ENCODE measurements at regions of chr1 and their contacts with region 1.

Region 1: DNA sequence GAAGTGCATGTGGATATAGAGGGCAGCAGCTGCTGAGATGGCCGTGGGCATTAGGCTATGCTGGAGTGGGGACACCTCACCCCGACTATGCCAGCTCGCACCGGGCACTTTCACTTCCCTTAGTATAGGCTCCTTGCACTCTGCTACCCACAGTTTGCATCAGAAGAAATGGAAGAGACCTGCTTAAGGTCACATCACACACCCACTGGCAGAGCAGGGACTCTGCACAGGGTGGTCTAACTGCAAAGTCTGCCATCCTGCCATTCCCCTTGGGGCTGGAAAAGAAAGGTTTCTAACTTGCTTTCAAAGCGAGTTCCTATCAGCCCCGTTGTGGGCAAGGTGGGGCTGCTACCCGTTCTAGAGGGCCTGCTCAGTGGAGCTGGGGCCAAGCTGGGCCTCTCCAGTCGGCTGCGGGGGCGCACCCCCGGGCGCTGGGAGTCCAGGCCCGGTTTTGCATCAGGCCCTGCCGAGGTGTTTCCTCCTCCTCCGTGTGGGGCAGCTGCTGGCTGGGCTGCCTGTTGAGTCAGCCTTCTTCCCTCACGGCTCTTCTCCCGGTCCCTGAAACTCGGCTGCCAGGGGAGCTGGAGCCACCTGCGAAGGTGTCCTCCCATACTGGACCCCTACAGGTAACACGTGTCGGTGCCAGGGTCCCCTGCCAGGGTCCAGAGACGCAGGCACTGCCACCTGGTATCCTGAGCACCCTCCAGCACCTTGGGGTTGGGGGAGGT is at the start of gene SYTL1:
- DNase-seq: peak; percentile 38 to 84 (median 72)
- ATAC-seq: peak; percentile 64
- H3K4me3 ChIP-seq: peak within 1 kb of the TSS; percentile 85 to 91
- H3K4me3 Mint-ChIP-seq: peak within 1 kb of the TSS; percentile 97
- H3K27ac ChIP-seq: peak within 1 kb of the TSS; percentile 69 to 86
- H3K27ac Mint-ChIP-seq: peak within 1 kb of the TSS; percentile 93
- H3K4me1 ChIP-seq: peaks cover 38% of the 10 kb centered on the region
- H3K4me1 Mint-ChIP-seq: peaks cover 55% of the 10 kb centered on the region
- H3K27me3 ChIP-seq: no peaks in the 10 kb centered on the region
- H3K27me3 Mint-ChIP-seq: no peaks in the 10 kb centered on the region
- CTCF ChIP-seq: no peak
- total RNA-seq, gene SYTL1: 103 to 113 TPM

Region 2: GRCh38 chr1:27321813-27322577 is 19.7 kb before region 1 on chr1 and contains the start of gene TMEM222:
- CTCF ChIA-PET with region 1: interaction called, 9 read pairs
- POLR2A ChIA-PET with region 1: interaction called, 8 read pairs
- intact Hi-C with region 1: loop called (anchors 1 kb)
- DNase-seq: peak; percentile 95 to 99 (median 97)
- ATAC-seq: peak; percentile 93
- H3K4me3 ChIP-seq: peak within 1 kb of the TSS; percentile 95 to 99
- H3K4me3 Mint-ChIP-seq: peak within 1 kb of the TSS; percentile 98
- H3K27ac ChIP-seq: peak within 1 kb of the TSS; percentile 88 to 95
- H3K27ac Mint-ChIP-seq: peak within 1 kb of the TSS; percentile 97
- H3K4me1 ChIP-seq: peaks cover 40% of the 10 kb centered on the region
- H3K4me1 Mint-ChIP-seq: peaks cover 48% of the 10 kb centered on the region
- H3K27me3 ChIP-seq: no peaks in the 10 kb centered on the region
- H3K27me3 Mint-ChIP-seq: no peaks in the 10 kb centered on the region
- CTCF ChIP-seq: no peak
- total RNA-seq, gene TMEM222: 24.1 to 25.2 TPM

Region 3: GRCh38 chr1:27357281-27358037 is 15.8 kb after region 1 on chr1:
- CTCF ChIA-PET with region 1: interaction called, 120 read pairs
- POLR2A ChIA-PET with region 1: interaction called, 27 read pairs
- intact Hi-C with region 1: loop called (anchors 1 kb)
- DNase-seq: peak; percentile 64 to 93 (median 81)
- ATAC-seq: peak; percentile 78
- H3K4me3 ChIP-seq: peak overlapping the region; percentile 57 to 78
- H3K4me3 Mint-ChIP-seq: peak overlapping the region; percentile 86
- H3K27ac ChIP-seq: peak overlapping the region; percentile 38 to 59
- H3K27ac Mint-ChIP-seq: peak overlapping the region; percentile 89
- H3K4me1 ChIP-seq: peaks cover 46% of the 10 kb centered on the region
- H3K4me1 Mint-ChIP-seq: peaks cover 55% of the 10 kb centered on the region
- H3K27me3 ChIP-seq: no peaks in the 10 kb centered on the region
- H3K27me3 Mint-ChIP-seq: no peaks in the 10 kb centered on the region
- CTCF ChIP-seq: peak; percentile 91

Region 4: DNA sequence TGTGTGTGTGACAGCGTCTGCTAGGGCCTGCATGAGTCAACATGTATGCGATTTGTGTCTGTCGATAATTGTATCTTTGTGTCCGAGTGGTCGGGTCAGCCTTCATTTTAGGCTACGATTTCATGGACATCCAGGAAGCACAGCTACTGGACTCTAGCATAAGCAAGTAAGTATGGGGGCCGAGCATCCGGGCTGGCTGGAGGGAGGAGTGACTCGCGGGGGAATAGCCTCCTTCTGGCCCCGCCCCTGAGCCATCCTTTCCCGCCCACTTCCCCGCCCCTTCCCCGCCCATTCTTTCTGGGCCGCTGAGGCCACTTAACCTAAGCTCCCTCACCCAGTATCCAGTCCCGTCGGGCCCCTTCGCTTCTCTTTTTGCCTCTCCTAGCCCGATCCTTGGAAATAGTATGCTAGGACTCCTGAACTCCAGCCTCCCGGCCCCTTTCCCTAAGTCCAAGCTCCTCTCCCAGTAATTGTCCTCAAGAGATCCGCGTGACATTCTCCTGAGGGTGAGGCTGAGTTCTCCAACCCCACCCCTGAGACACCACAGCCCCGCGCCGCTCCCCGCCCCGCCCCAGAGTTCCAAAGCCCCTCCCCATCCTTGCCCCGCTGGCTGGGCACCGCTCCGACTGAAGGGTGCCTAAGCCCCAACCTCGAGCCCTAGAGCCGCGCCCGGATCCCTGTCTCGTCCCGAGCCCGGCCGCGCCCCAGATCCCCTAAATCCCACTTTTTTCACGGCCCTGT is 23.9 kb after region 1 on chr1:
- CTCF ChIA-PET with region 1: interaction called, 8 read pairs
- POLR2A ChIA-PET with region 1: interaction called, 11 read pairs
- intact Hi-C with region 1: loop called in 1 of 2 experiments (anchors 1 kb)
- DNase-seq: peak; percentile 62 to 85 (median 78)
- ATAC-seq: peak; percentile 78
- H3K4me3 ChIP-seq: peak overlapping the region; percentile 66 to 73
- H3K4me3 Mint-ChIP-seq: peak overlapping the region; percentile 86
- H3K27ac ChIP-seq: no peak overlapping the region
- H3K27ac Mint-ChIP-seq: no peak overlapping the region
- H3K4me1 ChIP-seq: peaks cover 17% of the 10 kb centered on the region
- H3K4me1 Mint-ChIP-seq: peaks cover 34% of the 10 kb centered on the region
- H3K27me3 ChIP-seq: no peaks in the 10 kb centered on the region
- H3K27me3 Mint-ChIP-seq: no peaks in the 10 kb centered on the region
- CTCF ChIP-seq: no peak

Region 5: DNA sequence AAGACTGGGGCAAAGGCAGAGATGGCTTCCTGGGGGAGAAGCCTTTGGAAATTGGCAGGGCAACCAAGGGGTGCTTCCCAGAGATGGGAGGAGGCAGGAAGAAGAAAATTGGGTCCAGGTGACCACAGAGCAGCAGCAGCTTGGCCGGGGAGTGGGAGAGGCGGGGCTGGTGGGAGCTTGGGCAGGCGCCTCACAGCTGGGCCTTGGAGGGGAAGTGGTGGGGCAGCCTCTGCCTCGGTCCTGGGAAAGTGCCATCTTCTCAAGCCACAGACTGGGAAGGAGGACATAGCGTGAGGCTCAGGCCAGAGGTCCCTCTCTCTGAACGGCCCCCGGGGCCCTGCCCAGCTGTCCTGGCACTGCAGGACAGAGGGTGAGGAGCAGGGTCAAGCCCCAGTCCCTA is 172.3 kb after region 1 on chr1:
- CTCF ChIA-PET with region 1: no interaction called
- POLR2A ChIA-PET with region 1: no interaction called
- intact Hi-C with region 1: no loop called
- DNase-seq: no peak
- ATAC-seq: no peak
- H3K4me3 ChIP-seq: no peak overlapping the region
- H3K4me3 Mint-ChIP-seq: no peak overlapping the region
- H3K27ac ChIP-seq: no peak overlapping the region
- H3K27ac Mint-ChIP-seq: no peak overlapping the region
- H3K4me1 ChIP-seq: peaks cover 14% of the 10 kb centered on the region
- H3K4me1 Mint-ChIP-seq: peaks cover 19% of the 10 kb centered on the region
- H3K27me3 ChIP-seq: no peaks in the 10 kb centered on the region
- H3K27me3 Mint-ChIP-seq: no peaks in the 10 kb centered on the region
- CTCF ChIP-seq: no peak